T-cell (primary cell): ENCODE measurements at regions of chr2 and their contacts with region 1.

Region 1: DNA sequence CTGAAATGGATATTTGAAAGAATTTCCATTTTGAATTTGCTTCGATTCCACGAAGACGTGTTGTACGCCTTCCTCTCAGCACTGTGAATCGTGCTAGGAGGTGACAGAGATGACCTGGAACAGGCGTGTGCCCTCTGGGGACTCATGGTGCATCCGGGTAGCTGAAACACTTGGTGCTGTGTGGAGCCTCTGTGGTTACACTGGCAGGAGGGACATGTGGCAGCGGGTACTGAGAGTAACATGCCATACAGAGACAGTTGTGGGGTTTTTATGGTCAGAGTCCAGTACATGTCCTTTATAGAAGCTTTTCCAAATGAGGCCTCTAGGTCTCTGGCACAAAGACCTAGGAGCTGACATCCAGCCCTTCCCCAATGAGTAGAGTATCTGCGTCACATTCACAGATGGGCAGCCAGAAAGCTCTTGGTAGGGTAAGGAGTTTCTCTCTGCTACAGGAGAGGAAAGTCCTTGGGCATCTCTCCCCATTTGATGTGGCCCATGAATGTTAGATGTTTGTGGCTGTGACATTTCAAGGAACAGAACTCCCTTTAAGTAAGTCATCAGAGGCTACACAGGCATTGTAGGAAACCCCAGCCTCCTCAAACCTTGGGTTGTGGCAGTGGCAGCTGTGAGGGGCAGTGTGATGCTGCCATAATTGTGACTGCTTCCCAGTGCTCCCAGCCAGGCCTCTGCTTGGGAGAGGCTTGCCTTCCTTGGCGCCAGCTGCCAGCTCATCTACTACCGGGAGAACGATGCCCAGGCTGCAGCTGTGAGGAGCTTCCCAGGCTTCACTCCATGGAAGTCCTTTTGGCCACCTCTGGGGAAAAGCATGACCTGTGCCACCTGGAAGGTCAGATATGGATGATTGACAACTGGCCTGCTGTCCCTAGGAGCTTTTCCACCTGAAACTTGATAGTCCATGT is 80.6 kb downstream of the ACOXL start:
- DNase-seq: no peak
- ATAC-seq: no peak
- H3K4me3 ChIP-seq: no peak overlapping the region
- H3K4me3 Mint-ChIP-seq: no peak overlapping the region
- H3K27ac ChIP-seq: no peak overlapping the region
- H3K27ac Mint-ChIP-seq: no peak overlapping the region
- H3K4me1 ChIP-seq: no peaks in the 10 kb centered on the region
- H3K4me1 Mint-ChIP-seq: peaks cover 4 to 16% (median 5%) of the 10 kb centered on the region in 3 donors
- H3K27me3 ChIP-seq: peaks cover 0 to 3% of the 10 kb centered on the region in 2 experiments
- H3K27me3 Mint-ChIP-seq: peaks cover 2 to 3% of the 10 kb centered on the region in 2 donors

Region 2: GRCh38 chr2:110149330-110150220 is 663.4 kb before region 1 on chr2:
- CTCF ChIA-PET with region 1: no interaction called
- POLR2A ChIA-PET with region 1: no interaction called
- DNase-seq: no peak
- ATAC-seq: no peak
- H3K4me3 ChIP-seq: no peak overlapping the region
- H3K4me3 Mint-ChIP-seq: no peak overlapping the region
- H3K27ac ChIP-seq: no peak overlapping the region
- H3K27ac Mint-ChIP-seq: no peak overlapping the region
- H3K4me1 ChIP-seq: no peaks in the 10 kb centered on the region
- H3K4me1 Mint-ChIP-seq: no peaks in the 10 kb centered on the region
- H3K27me3 ChIP-seq: no peaks in the 10 kb centered on the region
- H3K27me3 Mint-ChIP-seq: peaks cover 0 to 5% of the 10 kb centered on the region in 2 donors

Region 3: DNA sequence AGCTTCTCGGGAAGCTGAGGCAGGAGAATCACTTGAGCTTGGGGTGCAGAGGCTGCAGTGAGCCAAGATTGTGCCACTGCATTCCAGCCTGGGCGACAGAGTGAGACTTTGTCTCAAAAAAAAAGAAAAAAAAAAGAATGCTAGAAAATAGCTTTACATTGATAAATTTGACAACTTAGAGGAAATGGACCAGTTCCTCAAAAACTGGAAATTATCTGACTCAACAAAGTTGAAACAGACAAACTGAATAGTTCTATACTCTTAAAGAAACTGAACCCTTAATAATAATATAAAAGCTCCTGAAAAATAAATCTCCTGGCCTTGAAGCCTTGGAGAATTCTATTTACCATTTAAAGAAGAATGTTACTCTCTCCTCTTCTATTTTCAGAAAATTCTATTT is 156.7 kb after region 1 on chr2:
- CTCF ChIA-PET with region 1: no interaction called
- POLR2A ChIA-PET with region 1: no interaction called
- DNase-seq: no peak
- ATAC-seq: no peak
- H3K4me3 ChIP-seq: no peak overlapping the region
- H3K4me3 Mint-ChIP-seq: no peak overlapping the region
- H3K27ac ChIP-seq: no peak overlapping the region
- H3K27ac Mint-ChIP-seq: no peak overlapping the region
- H3K4me1 ChIP-seq: no peaks in the 10 kb centered on the region
- H3K4me1 Mint-ChIP-seq: no peaks in the 10 kb centered on the region
- H3K27me3 ChIP-seq: peaks cover 0 to 9% of the 10 kb centered on the region in 2 experiments
- H3K27me3 Mint-ChIP-seq: peaks cover 0 to 9% of the 10 kb centered on the region in 2 donors

Region 4: DNA sequence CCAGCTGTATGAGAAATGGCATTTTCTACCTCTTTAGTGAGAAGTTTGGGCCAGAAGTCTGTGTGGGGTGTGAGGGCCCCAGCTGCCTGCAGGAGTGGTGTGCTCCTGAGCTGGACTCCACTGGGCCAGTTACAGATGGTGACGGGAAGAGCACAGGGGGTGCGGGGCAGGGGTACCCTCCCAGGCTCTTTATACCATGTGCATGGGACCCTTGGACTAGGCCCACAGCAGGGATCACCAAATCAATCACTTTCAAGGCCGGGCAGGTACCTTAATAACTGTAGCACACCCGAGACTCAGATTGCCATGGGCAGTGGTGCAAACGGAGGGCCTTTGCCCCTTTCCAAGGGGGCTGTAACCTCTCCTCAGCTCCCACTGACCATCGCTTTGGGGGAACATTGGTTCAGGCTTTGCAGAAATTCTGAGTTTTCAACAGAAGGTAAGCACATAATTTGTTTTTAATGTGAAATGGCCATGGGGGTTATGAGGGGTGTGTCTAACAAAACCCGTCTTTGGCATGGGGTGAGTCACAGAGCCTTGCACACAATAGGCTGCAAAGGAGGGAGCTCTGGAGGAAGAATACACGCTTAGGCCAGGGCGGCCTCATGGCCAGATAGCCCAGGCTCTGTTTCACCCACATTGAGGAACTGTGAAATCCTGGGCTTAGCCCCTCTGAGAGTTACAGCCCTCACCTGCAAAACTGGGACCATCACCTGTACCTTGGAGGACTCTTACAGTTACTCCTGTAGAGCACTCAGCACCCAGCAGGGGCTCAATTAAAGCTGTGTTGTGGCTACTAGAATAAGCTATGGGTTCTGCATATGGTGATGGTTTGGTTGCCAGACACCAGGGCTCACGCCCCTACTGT is 166.7 kb after region 1 on chr2:
- CTCF ChIA-PET with region 1: no interaction called
- POLR2A ChIA-PET with region 1: no interaction called
- DNase-seq: no peak
- ATAC-seq: no peak
- H3K4me3 ChIP-seq: no peak overlapping the region
- H3K4me3 Mint-ChIP-seq: no peak overlapping the region
- H3K27ac ChIP-seq: no peak overlapping the region
- H3K27ac Mint-ChIP-seq: no peak overlapping the region
- H3K4me1 ChIP-seq: peaks cover 0 to 4% of the 10 kb centered on the region in 2 experiments
- H3K4me1 Mint-ChIP-seq: no peaks in the 10 kb centered on the region
- H3K27me3 ChIP-seq: peaks cover 0 to 3% of the 10 kb centered on the region in 2 experiments
- H3K27me3 Mint-ChIP-seq: peaks cover 0 to 3% of the 10 kb centered on the region in 2 donors

Region 5: DNA sequence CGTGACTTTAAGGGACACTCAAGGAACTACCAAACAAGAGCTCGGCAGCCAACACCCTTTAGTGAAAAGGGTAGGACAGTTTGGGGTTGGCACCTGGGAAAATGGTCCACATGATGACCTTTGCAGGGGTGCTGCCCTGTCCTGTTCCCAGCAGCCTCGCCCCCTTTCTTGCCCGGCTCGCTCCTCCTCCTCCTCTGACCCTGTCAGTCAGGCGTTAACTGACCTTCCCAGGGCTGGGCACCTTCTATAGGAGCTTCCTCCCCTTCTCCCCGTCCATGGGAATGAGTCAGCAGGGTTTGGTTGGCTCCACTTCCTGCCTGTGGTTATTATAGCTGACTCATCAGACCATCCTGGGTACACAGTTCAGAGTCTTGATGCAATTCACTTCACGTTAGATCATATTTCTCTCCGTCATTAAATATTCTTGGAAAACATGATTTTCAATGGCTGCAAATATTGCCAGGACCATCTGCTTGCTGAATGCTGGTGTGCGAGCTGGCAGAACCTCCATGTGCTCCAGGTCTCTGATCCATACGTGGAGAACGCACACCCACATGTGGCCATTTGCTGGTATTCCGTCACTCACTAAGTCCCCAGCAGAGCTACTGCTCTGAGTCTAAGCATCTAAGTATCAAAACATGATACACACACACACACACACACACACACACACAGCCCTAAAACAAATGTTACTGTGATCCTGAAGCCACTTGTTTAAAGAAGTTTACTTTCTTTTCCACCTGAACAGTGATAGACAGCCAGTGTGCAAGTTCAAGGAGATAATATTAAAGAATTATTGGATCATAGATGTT is 886.0 kb after region 1 on chr2:
- CTCF ChIA-PET with region 1: interaction called in 1 of 2 experiments, 10 read pairs
- POLR2A ChIA-PET with region 1: no interaction called
- DNase-seq: peak in 27 of 35 experiments; percentile 4 to 51 (median 15)
- ATAC-seq: peak; percentile 57 to 93 (median 82)
- H3K4me3 ChIP-seq: no peak overlapping the region
- H3K4me3 Mint-ChIP-seq: peak overlapping the region; percentile 40 to 66 (median 57)
- H3K27ac ChIP-seq: no peak overlapping the region
- H3K27ac Mint-ChIP-seq: peak overlapping the region; percentile 59 to 89
- H3K4me1 ChIP-seq: peaks cover 0 to 19% of the 10 kb centered on the region in 2 experiments
- H3K4me1 Mint-ChIP-seq: peaks cover 15 to 24% (median 17%) of the 10 kb centered on the region in 3 donors
- H3K27me3 ChIP-seq: peaks cover 0 to 15% of the 10 kb centered on the region in 2 experiments
- H3K27me3 Mint-ChIP-seq: peaks cover under 1 to 4% of the 10 kb centered on the region in 2 donors